ENCODE measurements at regions of chr13 and their contacts with region 1.

Region 1: GRCh38 chr13:45310341-45311125 is 30.4 kb downstream of the TPT1 start:
- DNase-seq: no peak
- ATAC-seq: peak; percentile 37 to 39; a peak in 5 of 6 replicates
- H3K4me3 ChIP-seq: peak overlapping the region; percentile 32
- H3K27ac ChIP-seq: no peak overlapping the region
- H3K4me1 ChIP-seq: peaks cover 3% of the 10 kb centered on the region; the same call in 1 of the 3 replicates
- CTCF ChIP-seq: no peak
- EP300 ChIP-seq: no peak
- POLR2A ChIP-seq: no peak
- RAD21 ChIP-seq: no peak

Region 2: DNA sequence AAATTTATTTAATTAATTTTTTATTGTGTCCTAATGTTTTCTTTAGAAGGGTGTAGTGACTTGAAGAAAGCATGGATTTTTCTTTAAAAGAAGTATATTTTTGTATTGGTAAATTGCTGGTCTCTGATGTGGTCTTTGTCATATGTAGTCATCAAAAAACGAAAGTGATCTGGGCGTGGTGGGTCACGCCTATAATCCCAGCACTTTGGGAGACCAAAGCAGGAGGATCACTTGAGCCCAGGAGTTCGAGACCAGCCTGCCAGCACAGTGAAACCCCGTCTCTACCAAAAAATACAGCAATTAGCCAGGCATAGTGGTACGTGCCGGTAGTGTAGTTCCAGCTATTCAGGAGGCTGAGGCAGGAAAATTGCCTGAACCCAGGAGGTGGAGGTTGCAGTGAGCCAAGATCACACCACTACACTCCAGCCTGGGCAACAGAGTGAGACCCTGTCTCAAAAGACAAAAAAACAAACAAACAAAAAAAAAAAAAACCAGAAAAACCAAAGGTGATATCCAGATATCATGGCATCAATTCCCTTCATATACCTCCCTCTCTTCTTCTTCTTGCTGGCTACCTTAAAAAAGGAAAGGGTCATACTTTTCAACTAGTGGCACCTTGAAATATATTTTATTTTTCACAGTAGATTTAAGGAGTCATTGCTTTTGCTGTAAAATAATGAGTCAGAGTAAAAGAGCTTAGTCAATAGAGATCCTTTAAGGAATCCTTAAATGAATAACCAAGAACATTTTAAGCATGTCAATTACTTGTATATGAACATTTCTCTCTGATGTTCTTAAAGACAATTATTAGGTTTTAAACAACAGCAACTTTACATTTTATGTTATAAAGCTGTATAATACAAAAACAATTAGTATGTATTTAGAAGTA is 129.6 kb before region 1 on chr13:
- CTCF ChIA-PET with region 1: no interaction called
- POLR2A ChIA-PET with region 1: no interaction called
- DNase-seq: no peak
- ATAC-seq: no peak
- H3K4me3 ChIP-seq: no peak overlapping the region
- H3K27ac ChIP-seq: peak overlapping the region in 1 of 2 experiments; percentile 78; a peak in 3 of 6 replicates
- H3K4me1 ChIP-seq: peaks cover 45% of the 10 kb centered on the region
- CTCF ChIP-seq: no peak
- EP300 ChIP-seq: no peak
- POLR2A ChIP-seq: no peak
- RAD21 ChIP-seq: no peak

Region 3: GRCh38 chr13:45269204-45269603 is 41.3 kb before region 1 on chr13:
- CTCF ChIA-PET with region 1: no interaction called
- POLR2A ChIA-PET with region 1: no interaction called
- DNase-seq: no peak
- ATAC-seq: no peak
- H3K4me3 ChIP-seq: no peak overlapping the region
- H3K27ac ChIP-seq: no peak overlapping the region
- H3K4me1 ChIP-seq: no peaks in the 10 kb centered on the region
- CTCF ChIP-seq: no peak
- EP300 ChIP-seq: no peak
- POLR2A ChIP-seq: no peak
- RAD21 ChIP-seq: no peak

Region 4: GRCh38 chr13:45297456-45298205 is 12.9 kb before region 1 on chr13:
- CTCF ChIA-PET with region 1: interaction called, 33 read pairs
- POLR2A ChIA-PET with region 1: no interaction called
- DNase-seq: no peak
- ATAC-seq: no peak
- H3K4me3 ChIP-seq: no peak overlapping the region
- H3K27ac ChIP-seq: no peak overlapping the region
- H3K4me1 ChIP-seq: no peaks in the 10 kb centered on the region
- CTCF ChIP-seq: no peak
- EP300 ChIP-seq: no peak
- POLR2A ChIP-seq: no peak
- RAD21 ChIP-seq: no peak

Region 5: DNA sequence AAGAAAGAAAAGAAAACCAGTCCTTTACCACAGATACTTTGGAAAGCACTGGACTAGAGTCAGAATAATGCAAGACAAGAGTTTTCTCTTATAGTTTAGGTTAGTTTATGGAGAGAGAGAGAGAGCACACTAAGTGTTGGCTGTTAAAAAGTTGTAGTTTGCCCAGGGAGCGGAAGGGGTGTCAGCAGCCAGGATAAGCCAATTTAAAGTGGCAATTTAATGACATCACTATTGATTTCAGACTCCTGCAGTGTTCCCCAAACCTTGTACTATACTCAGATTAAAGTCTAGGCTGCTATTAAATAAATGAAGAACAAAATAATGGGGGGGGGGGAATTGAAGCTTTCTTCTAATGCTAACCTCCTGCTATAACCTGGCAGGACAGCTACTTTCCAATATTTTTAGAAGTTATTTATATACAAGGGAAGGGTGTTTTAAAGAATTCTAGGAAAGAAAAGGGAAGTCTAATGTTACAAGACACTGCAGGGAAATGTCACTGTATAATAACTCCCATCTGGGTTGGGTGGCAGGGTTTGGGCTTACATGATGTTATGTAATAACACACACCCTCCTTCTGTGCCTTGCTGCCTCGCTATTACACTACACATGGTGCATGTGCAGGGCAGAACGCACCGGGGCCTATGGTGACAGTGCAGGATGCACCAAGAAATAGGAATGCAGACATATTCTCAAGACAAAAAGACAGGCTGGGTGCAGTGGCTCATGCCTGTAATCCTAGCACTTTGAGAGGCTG is 10.5 kb after region 1 on chr13:
- CTCF ChIA-PET with region 1: interaction called, 11 read pairs
- POLR2A ChIA-PET with region 1: no interaction called
- DNase-seq: no peak
- ATAC-seq: no peak; a peak in 1 of 6 replicates
- H3K4me3 ChIP-seq: no peak overlapping the region
- H3K27ac ChIP-seq: no peak overlapping the region
- H3K4me1 ChIP-seq: peaks cover 21% of the 10 kb centered on the region
- CTCF ChIP-seq: no peak
- EP300 ChIP-seq: no peak
- POLR2A ChIP-seq: no peak
- RAD21 ChIP-seq: no peak